ENCODE measurements at regions of chr2 and their contacts with region 1.

Region 1: DNA sequence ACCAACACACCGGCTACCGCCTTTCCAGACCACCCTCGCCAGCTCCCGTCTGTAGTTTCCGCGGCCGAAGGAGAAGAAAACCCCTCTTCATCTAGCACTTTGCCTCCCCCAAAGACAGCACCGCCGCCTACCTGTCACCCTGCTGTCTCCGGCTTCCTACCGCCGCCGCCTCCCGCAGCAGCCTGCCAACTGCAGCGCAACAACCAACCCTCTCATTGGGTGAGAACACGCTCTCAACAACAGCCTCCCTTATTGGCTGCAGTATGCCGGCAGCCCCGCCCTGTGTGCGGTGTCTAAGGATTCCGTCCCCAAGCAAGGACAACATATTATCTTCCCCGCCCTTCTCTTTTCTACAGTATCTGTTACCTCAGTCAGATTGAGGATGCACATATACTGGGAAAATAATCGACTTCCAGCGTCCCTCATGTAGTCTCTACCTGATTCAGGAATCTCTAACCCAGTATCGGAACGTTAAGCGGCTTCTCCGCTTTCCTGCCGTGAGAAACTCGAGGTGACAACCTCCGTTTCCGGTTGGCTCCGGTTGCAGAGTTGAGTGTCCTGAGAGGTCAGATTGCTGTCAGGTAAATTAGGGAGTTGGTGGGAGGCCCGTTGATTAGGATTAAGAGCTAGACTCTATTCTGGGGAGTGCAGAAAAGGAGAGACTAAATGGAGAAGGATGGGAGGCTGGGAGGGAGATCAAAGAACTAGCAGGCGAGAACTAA is at the starts of genes HYCC2 and NDUFB3:
- DNase-seq: peak; percentile 95
- ATAC-seq: peak; percentile 97
- H3K4me3 ChIP-seq: peak within 1 kb of the TSS; percentile 80
- H3K27ac ChIP-seq: peak within 1 kb of the TSS; percentile 92
- H3K4me1 ChIP-seq: peaks cover 23% of the 10 kb centered on the region
- H3K27me3 ChIP-seq: no peaks in the 10 kb centered on the region
- CTCF ChIP-seq: peak in 2 of 3 experiments; percentile 28 to 43; a peak in 3 of 6 replicates
- EP300 ChIP-seq: 0 out of 4 replicates have a peak, but pooled peaks of 1 of the 2 experiments have one; percentile 13
- POLR2A ChIP-seq: peak; percentile 91
- RAD21 ChIP-seq: no peak
- polyA plus RNA-seq, gene HYCC2: 3.4 to 6.8 TPM
- polyA plus RNA-seq, gene NDUFB3: 1,005 to 1,059 TPM

Region 2: DNA sequence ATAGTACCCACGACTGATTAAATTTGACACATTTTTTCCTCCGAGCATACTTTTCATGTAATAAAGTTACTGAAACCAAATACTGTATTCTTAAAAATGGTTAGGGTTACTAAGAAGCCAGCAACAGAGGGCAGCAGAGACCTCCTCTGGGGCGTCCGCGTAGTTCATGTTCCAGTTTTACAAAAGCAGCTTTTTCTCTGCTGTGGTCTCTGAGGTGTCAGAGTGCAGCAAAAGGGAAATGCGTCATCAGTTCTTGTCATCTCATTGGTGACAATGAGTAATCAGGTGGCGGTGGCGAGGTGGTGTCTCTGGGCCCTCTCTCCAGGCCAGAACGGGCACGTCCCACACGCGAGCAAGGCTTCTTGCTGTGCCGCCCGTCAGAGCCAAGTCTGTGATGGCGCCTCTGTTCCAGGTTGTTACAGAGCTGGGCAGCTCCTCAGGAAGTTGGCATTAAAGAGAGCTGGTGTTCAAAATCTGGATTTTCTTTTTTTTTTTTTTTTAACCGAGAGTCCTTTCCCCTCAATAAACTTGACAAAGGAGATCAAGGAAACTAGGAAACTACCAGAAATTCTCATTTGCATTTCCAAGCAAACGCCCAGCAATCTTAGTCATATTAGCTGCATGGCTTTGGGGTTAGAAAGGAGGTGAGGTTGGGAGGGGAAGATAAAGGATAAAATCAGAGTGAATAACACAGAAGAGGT is 358.5 kb before region 1 on chr2:
- CTCF ChIA-PET with region 1: interaction called, 43 read pairs
- POLR2A ChIA-PET with region 1: interaction called, 6 read pairs
- RAD21 ChIA-PET with region 1: interaction called, 21 read pairs
- SMC1A ChIA-PET with region 1: interaction called, 38 read pairs
- in situ Hi-C with region 1: loop called (anchors 10 kb)
- intact Hi-C with region 1: loop called (anchors 2 kb)
- DNase-seq: peak; percentile 98
- ATAC-seq: peak; percentile 99
- H3K4me3 ChIP-seq: no peak overlapping the region
- H3K27ac ChIP-seq: peak overlapping the region; percentile 82
- H3K4me1 ChIP-seq: peaks cover 7% of the 10 kb centered on the region
- H3K27me3 ChIP-seq: no peaks in the 10 kb centered on the region
- CTCF ChIP-seq: peak; percentile 75 to 94 (median 80)
- EP300 ChIP-seq: peak; percentile 85 to 94; a peak in 3 of 4 replicates
- POLR2A ChIP-seq: peak; percentile 98
- RAD21 ChIP-seq: peak; percentile 95

Region 3: DNA sequence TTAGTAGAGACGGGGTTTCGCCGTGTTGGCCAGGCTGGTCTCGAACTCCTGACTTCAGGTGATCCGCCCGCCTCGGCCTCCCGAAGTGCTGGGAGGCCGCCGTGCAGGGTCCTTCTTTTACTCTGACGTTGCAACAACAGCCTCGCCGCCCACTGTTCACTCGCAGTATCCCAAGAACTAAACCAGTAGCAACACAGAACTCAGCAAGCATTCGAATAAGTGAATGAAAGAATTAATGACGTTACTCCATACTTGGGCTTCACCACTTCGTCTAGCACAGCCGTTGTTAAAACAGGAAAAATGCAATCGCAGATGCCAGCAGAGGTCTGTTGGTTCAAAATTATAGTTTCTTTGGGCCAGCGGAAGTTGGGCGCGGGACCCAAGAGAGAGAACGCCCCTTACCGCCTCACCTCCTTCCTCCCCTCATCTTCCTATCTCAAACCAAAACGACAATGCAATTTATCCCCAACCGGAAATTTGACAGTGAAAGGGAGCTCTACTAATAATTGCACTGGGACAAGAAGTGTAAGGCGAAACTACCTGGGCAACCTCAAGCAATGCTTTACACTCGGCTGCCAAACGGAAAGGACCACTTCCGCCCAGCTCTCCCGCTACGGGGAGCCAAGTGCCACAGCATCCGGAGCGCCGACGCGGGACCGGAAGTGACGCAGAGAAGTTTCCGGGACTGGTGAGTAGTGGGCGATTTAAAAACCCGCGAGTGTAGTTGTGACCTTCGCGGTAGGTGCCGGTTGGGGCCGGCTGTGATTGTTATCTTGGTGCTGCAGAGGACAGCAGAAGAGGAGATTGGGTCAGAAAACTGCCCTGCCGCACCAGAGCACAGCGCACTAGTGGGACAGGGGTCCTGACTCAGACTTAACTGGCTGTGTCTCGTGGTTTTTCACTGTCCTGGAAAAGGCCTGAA is 182.7 kb before region 1 on chr2 and contains the starts of genes NIF3L1 and PPIL3:
- CTCF ChIA-PET with region 1: interaction called, 11 read pairs
- POLR2A ChIA-PET with region 1: no interaction called
- RAD21 ChIA-PET with region 1: interaction called, 5 read pairs
- SMC1A ChIA-PET with region 1: interaction called, 7 read pairs
- in situ Hi-C with region 1: no loop called
- intact Hi-C with region 1: no loop called
- DNase-seq: peak; percentile 97
- ATAC-seq: peak; percentile 92
- H3K4me3 ChIP-seq: peak within 1 kb of the TSS; percentile 84
- H3K27ac ChIP-seq: peak within 1 kb of the TSS; percentile 85
- H3K4me1 ChIP-seq: peaks cover 11% of the 10 kb centered on the region
- H3K27me3 ChIP-seq: no peaks in the 10 kb centered on the region
- CTCF ChIP-seq: no peak
- EP300 ChIP-seq: peak in 1 of 2 experiments; percentile 64; a peak in 2 of 4 replicates
- POLR2A ChIP-seq: peak; percentile 82
- RAD21 ChIP-seq: no peak
- polyA plus RNA-seq, gene NIF3L1: 58.3 to 88.2 TPM
- polyA plus RNA-seq, gene PPIL3: 71.2 to 103 TPM

Region 4: GRCh38 chr2:200963124-200963917 is 108.3 kb before region 1 on chr2 and contains the start of gene ORC2:
- CTCF ChIA-PET with region 1: interaction called, 154 read pairs
- POLR2A ChIA-PET with region 1: interaction called, 7 read pairs
- RAD21 ChIA-PET with region 1: interaction called, 62 read pairs
- SMC1A ChIA-PET with region 1: interaction called, 80 read pairs
- in situ Hi-C with region 1: no loop called
- intact Hi-C with region 1: loop called (anchors 1 kb)
- DNase-seq: peak; percentile 78
- ATAC-seq: peak; percentile 93
- H3K4me3 ChIP-seq: peak within 1 kb of the TSS; percentile 99
- H3K27ac ChIP-seq: peak within 1 kb of the TSS; percentile 67
- H3K4me1 ChIP-seq: peaks cover 7% of the 10 kb centered on the region; the same call in 1 of the 2 replicates
- H3K27me3 ChIP-seq: no peaks in the 10 kb centered on the region
- CTCF ChIP-seq: peak; percentile 58 to 73 (median 64)
- EP300 ChIP-seq: no peak
- POLR2A ChIP-seq: peak; percentile 94
- RAD21 ChIP-seq: peak; percentile 52
- polyA plus RNA-seq, gene ORC2: 6.1 to 6.7 TPM

Region 5: DNA sequence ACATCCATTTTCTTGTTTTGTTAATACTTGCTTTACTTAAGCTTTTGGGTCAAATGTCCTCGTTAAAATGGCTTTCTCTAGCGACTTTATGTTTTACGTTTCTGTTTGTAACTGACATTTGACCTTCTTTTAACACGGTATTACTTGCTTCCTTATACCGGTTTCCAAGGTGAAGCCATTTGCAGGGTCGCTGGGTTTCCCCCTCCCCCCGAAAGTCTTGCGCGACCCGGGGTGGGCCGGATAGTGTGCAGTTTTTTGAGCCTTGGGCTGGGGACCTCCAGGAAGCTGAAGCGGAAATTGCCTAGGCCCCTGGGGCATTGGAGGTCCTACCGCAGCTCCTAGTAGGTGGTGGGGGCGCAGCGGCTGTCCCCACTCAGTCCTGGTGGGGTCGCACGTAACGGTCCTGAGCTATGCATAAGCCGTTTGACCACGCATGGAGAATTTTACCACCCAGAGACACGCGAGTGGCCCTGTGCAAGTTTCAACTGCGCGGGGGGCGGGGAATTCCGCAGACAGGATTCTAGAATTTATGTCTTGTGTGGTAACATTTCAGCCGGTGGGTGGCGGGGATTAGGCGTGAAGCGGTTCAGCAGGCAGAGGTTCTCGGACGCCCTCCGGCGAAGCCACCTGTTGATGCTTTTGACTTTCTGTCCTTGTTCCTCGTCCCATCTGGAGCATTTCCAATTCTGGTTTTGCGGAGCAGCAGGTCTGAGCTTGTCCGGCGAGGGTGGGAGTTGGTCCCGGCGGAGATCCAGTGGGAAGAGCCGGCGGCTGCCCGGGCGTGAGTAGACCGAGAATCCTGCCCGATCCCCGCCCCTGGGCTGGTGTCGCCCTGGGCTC is 46.7 kb after region 1 on chr2:
- CTCF ChIA-PET with region 1: interaction called, 18 read pairs
- POLR2A ChIA-PET with region 1: interaction called, 20 read pairs
- RAD21 ChIA-PET with region 1: interaction called, 45 read pairs
- SMC1A ChIA-PET with region 1: interaction called, 55 read pairs
- in situ Hi-C with region 1: no loop called
- intact Hi-C with region 1: loop called (anchors 2 kb)
- DNase-seq: no peak
- ATAC-seq: peak; percentile 61
- H3K4me3 ChIP-seq: peak overlapping the region; percentile 82
- H3K27ac ChIP-seq: peak overlapping the region; percentile 99
- H3K4me1 ChIP-seq: peaks cover 16% of the 10 kb centered on the region
- H3K27me3 ChIP-seq: no peaks in the 10 kb centered on the region
- CTCF ChIP-seq: peak; percentile 37 to 65 (median 42)
- EP300 ChIP-seq: peak; percentile 88 to 89; a peak in 3 of 4 replicates
- POLR2A ChIP-seq: peak; percentile 83
- RAD21 ChIP-seq: peak; percentile 66

Region 6: GRCh38 chr2:201158111-201158929 is 86.7 kb after region 1 on chr2:
- CTCF ChIA-PET with region 1: interaction called, 54 read pairs
- POLR2A ChIA-PET with region 1: interaction called, 6 read pairs
- RAD21 ChIA-PET with region 1: interaction called, 34 read pairs
- SMC1A ChIA-PET with region 1: interaction called, 43 read pairs
- in situ Hi-C with region 1: no loop called
- intact Hi-C with region 1: loop called (anchors 5 kb)
- DNase-seq: peak; percentile 77
- ATAC-seq: peak; percentile 98
- H3K4me3 ChIP-seq: no peak overlapping the region
- H3K27ac ChIP-seq: peak overlapping the region; percentile 35
- H3K4me1 ChIP-seq: peaks cover 14% of the 10 kb centered on the region
- H3K27me3 ChIP-seq: no peaks in the 10 kb centered on the region
- CTCF ChIP-seq: peak; percentile 62 to 76 (median 66)
- EP300 ChIP-seq: peak; percentile 59 to 70; a peak in 2 of 4 replicates
- POLR2A ChIP-seq: no peak
- RAD21 ChIP-seq: peak; percentile 77

Measured in GM12878 (cell line).